Natural killer cell (primary cell): ENCODE measurements at regions of chr13 and their contacts with region 1.

Region 1: GRCh38 chr13:43023289-43023951 is at the start of gene DNAJC15:
- DNase-seq: peak; percentile 83 to 88
- ATAC-seq: peak; percentile 89 to 92 (median 90)
- H3K4me3 ChIP-seq: peak within 1 kb of the TSS; percentile 71
- H3K4me3 Mint-ChIP-seq: peak within 1 kb of the TSS; percentile 94
- H3K27ac ChIP-seq: peak within 1 kb of the TSS; percentile 77
- H3K27ac Mint-ChIP-seq: peak within 1 kb of the TSS; percentile 91 to 99
- H3K4me1 ChIP-seq: peaks cover 22% of the 10 kb centered on the region
- H3K4me1 Mint-ChIP-seq: peaks cover 18 to 34% of the 10 kb centered on the region in 2 donors
- H3K27me3 ChIP-seq: no peaks in the 10 kb centered on the region
- H3K27me3 Mint-ChIP-seq: no peaks in the 10 kb centered on the region
- CTCF ChIP-seq: no peak
- total RNA-seq, gene DNAJC15: 7.7 to 10.0 (median 8.3) TPM

Region 2: GRCh38 chr13:42574435-42575311 is 448.7 kb before region 1 on chr13:
- intact Hi-C with region 1: no loop called
- DNase-seq: peak; percentile 28 to 39
- ATAC-seq: peak; percentile 55 to 70 (median 68)
- H3K4me3 ChIP-seq: peak overlapping the region; percentile 21
- H3K4me3 Mint-ChIP-seq: peak overlapping the region; percentile 80
- H3K27ac ChIP-seq: no peak overlapping the region
- H3K27ac Mint-ChIP-seq: peak overlapping the region; percentile 1 to 71
- H3K4me1 ChIP-seq: peaks cover 19% of the 10 kb centered on the region
- H3K4me1 Mint-ChIP-seq: peaks cover 45% of the 10 kb centered on the region in 2 donors
- H3K27me3 ChIP-seq: no peaks in the 10 kb centered on the region
- H3K27me3 Mint-ChIP-seq: peaks cover 7 to 8% of the 10 kb centered on the region in 2 donors
- CTCF ChIP-seq: no peak

Region 3: GRCh38 chr13:42991892-42992763 is 31.3 kb before region 1 on chr13 and contains the start of gene EPSTI1:
- intact Hi-C with region 1: loop called (anchors 2 kb)
- DNase-seq: peak; percentile 68 to 87
- ATAC-seq: peak; percentile 86 to 91 (median 88)
- H3K4me3 ChIP-seq: peak within 1 kb of the TSS; percentile 92
- H3K4me3 Mint-ChIP-seq: peak within 1 kb of the TSS; percentile 95
- H3K27ac ChIP-seq: peak within 1 kb of the TSS; percentile 98
- H3K27ac Mint-ChIP-seq: peak within 1 kb of the TSS; percentile 98 to 99
- H3K4me1 ChIP-seq: peaks cover 23% of the 10 kb centered on the region
- H3K4me1 Mint-ChIP-seq: peaks cover 33 to 34% of the 10 kb centered on the region in 2 donors
- H3K27me3 ChIP-seq: no peaks in the 10 kb centered on the region
- H3K27me3 Mint-ChIP-seq: no peaks in the 10 kb centered on the region
- CTCF ChIP-seq: no peak
- total RNA-seq, gene EPSTI1: 23.4 to 57.4 (median 34.4) TPM